ENCODE measurements at regions of chr18 and their contacts with region 1.

Region 1: DNA sequence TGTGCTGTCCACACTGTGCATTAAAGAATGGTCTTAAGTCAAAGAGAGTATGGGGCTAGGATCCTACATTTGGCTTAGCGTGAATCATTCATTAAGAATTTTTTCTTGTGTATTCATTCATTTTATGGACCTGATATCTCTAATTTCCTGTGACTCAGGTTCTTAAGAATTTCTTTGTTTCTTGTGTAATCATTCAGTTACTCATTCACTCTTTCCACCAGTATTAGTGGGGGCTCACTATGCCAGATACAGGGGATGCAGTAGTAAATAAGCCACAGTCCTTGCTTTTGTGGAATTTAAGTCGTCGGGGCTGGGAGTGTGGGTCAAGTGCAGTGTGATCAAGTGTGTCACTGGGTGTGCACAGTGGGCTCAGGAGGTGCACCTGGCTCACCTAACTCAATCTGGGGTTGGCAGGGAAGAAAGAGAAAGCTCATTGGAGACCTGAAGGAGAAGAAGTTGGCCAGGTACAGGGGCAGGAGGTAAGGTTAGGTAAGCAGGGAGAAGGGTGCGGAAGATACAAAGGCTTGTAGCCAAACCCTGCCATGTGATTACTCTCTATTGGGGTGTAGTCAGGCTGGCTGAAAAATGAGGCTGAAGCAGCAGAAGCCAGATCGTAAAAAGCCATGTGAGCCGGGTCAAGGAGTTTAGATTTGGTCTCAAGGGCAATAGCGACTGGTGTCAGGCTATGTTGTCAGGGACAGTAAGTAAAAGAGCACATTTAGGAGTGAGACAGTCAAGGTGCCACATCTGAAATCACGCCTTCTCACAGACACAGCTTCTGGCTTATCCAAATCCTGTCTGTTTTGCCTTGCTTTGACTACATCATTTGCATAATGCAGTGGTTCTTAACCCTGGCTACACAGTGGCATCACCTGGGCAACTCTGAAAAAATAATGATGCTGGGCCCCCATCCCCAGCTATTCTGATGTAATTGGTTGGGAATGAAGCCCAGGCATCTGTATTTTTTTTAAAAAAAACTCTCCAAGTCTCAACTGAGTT is 67.2 kb downstream of the KCTD1 start:
- DNase-seq: peak; percentile 93
- ATAC-seq: peak; percentile 72
- H3K4me3 ChIP-seq: peak overlapping the region; percentile 17 to 49
- H3K27ac ChIP-seq: peak overlapping the region; percentile 99
- H3K4me1 ChIP-seq: peaks cover 71 to 94% of the 10 kb centered on the region in 2 experiments
- H3K27me3 ChIP-seq: no peaks in the 10 kb centered on the region
- CTCF ChIP-seq: no peak
- POLR2A ChIP-seq: no peak
- RAD21 ChIP-seq: peak; percentile 23; the same call in 1 of the 2 replicates

Region 2: DNA sequence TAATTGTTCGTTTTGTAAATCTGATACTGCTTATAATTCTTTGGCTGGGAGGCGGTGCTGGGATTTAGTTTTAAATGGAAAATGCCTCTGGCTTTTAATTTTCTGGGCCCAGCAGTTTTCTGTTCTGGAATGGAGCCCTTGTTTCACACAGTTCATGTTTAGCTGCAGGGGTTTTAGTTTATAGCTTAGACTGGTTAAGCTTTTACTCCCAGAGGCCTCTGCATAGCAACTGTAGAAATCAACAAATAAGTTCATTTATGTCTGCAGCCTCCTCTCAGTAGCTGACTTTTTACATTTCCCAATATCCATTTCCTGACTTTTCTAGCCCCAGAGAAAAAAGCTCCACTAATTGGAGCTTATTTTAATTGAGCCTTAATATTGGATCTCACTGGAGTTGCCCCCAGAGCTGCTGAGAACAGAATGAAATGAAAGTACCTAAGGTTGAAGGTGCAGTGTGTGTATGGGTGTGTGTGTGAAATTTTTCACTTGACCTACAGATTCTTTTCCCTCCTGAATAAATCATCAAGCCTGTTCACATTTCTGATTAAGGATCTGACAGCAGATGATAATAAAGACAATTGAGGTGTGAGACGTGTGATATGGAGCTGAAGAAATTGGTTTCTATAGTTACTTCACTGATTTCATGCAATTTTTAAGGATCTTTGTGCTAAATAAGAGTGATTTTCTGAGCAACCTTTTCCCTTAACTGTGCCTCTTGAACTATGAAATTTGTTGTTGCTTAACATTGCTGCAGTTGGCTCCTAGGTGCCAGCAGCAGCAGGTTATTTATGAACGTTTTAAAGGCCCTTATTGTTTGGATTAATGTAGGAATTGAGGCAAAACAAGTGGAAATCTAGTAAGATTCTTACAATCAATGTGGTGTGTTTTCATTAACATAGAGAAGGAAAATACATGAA is 145.4 kb before region 1 on chr18:
- CTCF ChIA-PET with region 1: no interaction called
- POLR2A ChIA-PET with region 1: no interaction called
- RAD21 ChIA-PET with region 1: no interaction called
- intact Hi-C with region 1: no loop called
- DNase-seq: no peak
- ATAC-seq: no peak
- H3K4me3 ChIP-seq: no peak overlapping the region
- H3K27ac ChIP-seq: no peak overlapping the region
- H3K4me1 ChIP-seq: no peaks in the 10 kb centered on the region
- H3K27me3 ChIP-seq: no peaks in the 10 kb centered on the region
- CTCF ChIP-seq: no peak
- POLR2A ChIP-seq: no peak
- RAD21 ChIP-seq: no peak

Region 3: GRCh38 chr18:26436176-26437031 is 44.8 kb before region 1 on chr18:
- CTCF ChIA-PET with region 1: no interaction called
- POLR2A ChIA-PET with region 1: interaction called, 13 read pairs
- RAD21 ChIA-PET with region 1: no interaction called
- intact Hi-C with region 1: no loop called
- DNase-seq: peak; percentile 73
- ATAC-seq: peak; percentile 69
- H3K4me3 ChIP-seq: peak overlapping the region in 1 of 2 experiments; percentile 35; a peak in 3 of 4 replicates
- H3K27ac ChIP-seq: no peak overlapping the region
- H3K4me1 ChIP-seq: peaks cover 15 to 17% of the 10 kb centered on the region in 2 experiments; a peak in 3 of 4 replicates
- H3K27me3 ChIP-seq: no peaks in the 10 kb centered on the region
- CTCF ChIP-seq: no peak
- POLR2A ChIP-seq: no peak
- RAD21 ChIP-seq: no peak

Region 4: DNA sequence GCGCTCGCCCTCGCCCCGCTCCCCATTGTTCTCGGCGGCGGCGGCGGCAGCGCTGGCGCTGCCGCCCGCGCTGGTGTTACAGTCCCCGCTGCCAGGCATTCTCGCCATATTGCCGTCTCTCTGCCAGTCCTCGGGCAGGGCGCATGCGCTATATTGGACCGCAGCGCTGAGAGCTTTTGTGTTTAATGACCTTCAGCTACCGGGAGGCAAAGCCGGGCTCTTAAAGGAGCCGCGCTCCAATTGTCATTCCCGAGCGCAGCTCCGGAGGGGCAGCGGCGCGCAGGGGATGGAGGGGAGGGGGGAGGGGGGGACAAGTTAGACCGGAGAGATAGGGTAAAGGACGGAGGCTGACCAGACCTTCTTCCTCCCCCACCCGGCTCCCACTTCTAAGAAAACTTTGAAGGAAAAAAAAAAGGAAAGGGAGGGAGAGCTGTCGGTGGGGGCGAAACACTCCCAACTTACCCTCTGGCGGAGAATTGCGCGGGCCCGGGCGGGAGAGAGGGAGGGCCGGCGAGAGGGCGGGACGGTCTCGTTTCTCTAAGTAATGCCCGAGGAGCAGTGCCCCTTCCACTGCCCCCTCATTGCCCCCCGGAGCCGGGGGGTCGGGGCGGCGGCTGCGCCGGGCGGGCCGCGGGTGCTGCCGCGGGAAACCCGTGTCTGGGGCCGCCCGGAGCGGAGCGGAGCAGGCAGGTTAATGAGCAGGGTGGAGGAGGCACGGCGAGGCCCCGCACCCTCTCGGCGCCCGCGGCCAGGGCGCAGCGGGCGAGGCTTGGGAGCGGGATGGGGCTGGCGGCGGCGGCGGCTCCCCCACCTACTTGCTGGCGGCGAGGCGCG is 67.5 kb after region 1 on chr18 and contains the start of gene KCTD1:
- CTCF ChIA-PET with region 1: interaction called, 6 read pairs
- POLR2A ChIA-PET with region 1: interaction called, 18 read pairs
- RAD21 ChIA-PET with region 1: no interaction called
- intact Hi-C with region 1: loop called (anchors 5 kb)
- DNase-seq: peak; percentile 56
- ATAC-seq: peak; percentile 62
- H3K4me3 ChIP-seq: peak within 1 kb of the TSS; percentile 68 to 73
- H3K27ac ChIP-seq: peak within 1 kb of the TSS; percentile 88
- H3K4me1 ChIP-seq: peaks cover 8 to 15% of the 10 kb centered on the region in 2 experiments; a peak in 3 of 4 replicates
- H3K27me3 ChIP-seq: no peaks in the 10 kb centered on the region
- CTCF ChIP-seq: no peak
- POLR2A ChIP-seq: no peak
- RAD21 ChIP-seq: no peak
- total RNA-seq, gene KCTD1: 16.8 TPM

Region 5: GRCh38 chr18:26656944-26657536 is 175.8 kb after region 1 on chr18:
- CTCF ChIA-PET with region 1: no interaction called
- POLR2A ChIA-PET with region 1: no interaction called
- RAD21 ChIA-PET with region 1: no interaction called
- intact Hi-C with region 1: loop called (anchors 5 kb)
- DNase-seq: no peak
- ATAC-seq: peak; percentile 72
- H3K4me3 ChIP-seq: peak overlapping the region; percentile 58 to 65
- H3K27ac ChIP-seq: no peak overlapping the region; the same call in 1 of the 2 replicates
- H3K4me1 ChIP-seq: peaks cover 8 to 13% of the 10 kb centered on the region in 2 experiments
- H3K27me3 ChIP-seq: peaks cover 78% of the 10 kb centered on the region
- CTCF ChIP-seq: peak in 1 of 3 experiments; percentile 28; a peak in 1 of 6 replicates
- POLR2A ChIP-seq: no peak
- RAD21 ChIP-seq: no peak

Region 6: GRCh38 chr18:27017901-27018500 is 536.8 kb after region 1 on chr18:
- CTCF ChIA-PET with region 1: no interaction called
- POLR2A ChIA-PET with region 1: no interaction called
- RAD21 ChIA-PET with region 1: no interaction called
- intact Hi-C with region 1: no loop called
- DNase-seq: no peak
- ATAC-seq: no peak
- H3K4me3 ChIP-seq: no peak overlapping the region
- H3K27ac ChIP-seq: no peak overlapping the region
- H3K4me1 ChIP-seq: no peaks in the 10 kb centered on the region
- H3K27me3 ChIP-seq: peaks cover 5% of the 10 kb centered on the region; the same call in 1 of the 2 replicates
- CTCF ChIP-seq: peak; percentile 17 to 59 (median 51); a peak in 4 of 6 replicates
- POLR2A ChIP-seq: no peak
- RAD21 ChIP-seq: peak; percentile 60

Measured in HCT116 (cell line).